ENCODE measurements at regions of chr1 and their contacts with region 1.

Region 1: GRCh38 chr1:161792740-161793139 is 26.6 kb downstream of the ATF6 start:
- DNase-seq: peak in 4 of 5 donors; percentile 42 to 49 (median 44)
- H3K4me3 ChIP-seq: no peak overlapping the region
- H3K4me3 Mint-ChIP-seq: no peak overlapping the region
- H3K27ac ChIP-seq: no peak overlapping the region
- H3K27ac Mint-ChIP-seq: peak overlapping the region in 1 of 7 donors; percentile 10
- H3K4me1 ChIP-seq: no peaks in the 10 kb centered on the region
- H3K4me1 Mint-ChIP-seq: peaks cover 3 to 7% (median 6%) of the 10 kb centered on the region in 4 donors
- H3K27me3 ChIP-seq: no peaks in the 10 kb centered on the region
- H3K27me3 Mint-ChIP-seq: no peaks in the 10 kb centered on the region

Region 2: GRCh38 chr1:161905269-161905884 is 112.6 kb after region 1 on chr1:
- CTCF ChIA-PET with region 1: interaction called, 26 read pairs
- POLR2A ChIA-PET with region 1: no interaction called
- intact Hi-C with region 1: loop called (anchors 10 kb)
- DNase-seq: peak in 3 of 5 donors; percentile 7 to 28 (median 11)
- H3K4me3 ChIP-seq: no peak overlapping the region
- H3K4me3 Mint-ChIP-seq: no peak overlapping the region
- H3K27ac ChIP-seq: no peak overlapping the region
- H3K27ac Mint-ChIP-seq: no peak overlapping the region
- H3K4me1 ChIP-seq: no peaks in the 10 kb centered on the region
- H3K4me1 Mint-ChIP-seq: peaks cover 5 to 9% (median 6%) of the 10 kb centered on the region in 4 donors
- H3K27me3 ChIP-seq: no peaks in the 10 kb centered on the region
- H3K27me3 Mint-ChIP-seq: no peaks in the 10 kb centered on the region

Region 3: DNA sequence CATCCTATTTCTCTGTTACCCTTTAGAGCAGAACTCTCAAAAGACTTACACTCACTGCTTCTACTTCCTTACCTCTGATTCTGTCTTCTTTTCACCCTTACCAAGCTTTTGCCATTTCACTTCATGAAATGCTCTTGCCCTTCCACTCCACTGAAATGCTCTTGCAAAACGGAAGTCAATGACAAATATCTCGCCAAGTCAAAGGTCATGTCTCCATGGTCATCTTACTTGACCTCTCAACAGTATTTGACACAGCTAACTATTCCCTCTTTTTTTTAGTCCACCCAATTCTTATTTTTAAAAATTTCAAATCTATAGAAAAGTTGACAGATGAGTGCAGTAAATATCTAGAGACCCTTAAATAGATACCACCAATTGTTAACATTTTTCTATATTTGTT is 123.2 kb after region 1 on chr1:
- CTCF ChIA-PET with region 1: no interaction called
- POLR2A ChIA-PET with region 1: no interaction called
- intact Hi-C with region 1: no loop called
- DNase-seq: no peak
- H3K4me3 ChIP-seq: no peak overlapping the region
- H3K4me3 Mint-ChIP-seq: no peak overlapping the region
- H3K27ac ChIP-seq: no peak overlapping the region
- H3K27ac Mint-ChIP-seq: no peak overlapping the region
- H3K4me1 ChIP-seq: peaks cover 17% of the 10 kb centered on the region
- H3K4me1 Mint-ChIP-seq: peaks cover 15 to 16% (median 15%) of the 10 kb centered on the region in 4 donors
- H3K27me3 ChIP-seq: no peaks in the 10 kb centered on the region
- H3K27me3 Mint-ChIP-seq: no peaks in the 10 kb centered on the region

Region 4: GRCh38 chr1:162023547-162024501 is 231.1 kb after region 1 on chr1 and contains the start of gene OLFML2B:
- CTCF ChIA-PET with region 1: interaction called, 8 read pairs
- POLR2A ChIA-PET with region 1: no interaction called
- intact Hi-C with region 1: loop called (anchors 1 kb)
- DNase-seq: peak in 4 of 5 donors; percentile 30 to 33 (median 31)
- H3K4me3 ChIP-seq: peak within 1 kb of the TSS; percentile 49 to 63
- H3K4me3 Mint-ChIP-seq: peak within 1 kb of the TSS; percentile 86 to 95 (median 88)
- H3K27ac ChIP-seq: no peak within 1 kb of the TSS
- H3K27ac Mint-ChIP-seq: peak within 1 kb of the TSS in 2 of 7 donors; percentile 30 to 70
- H3K4me1 ChIP-seq: peaks cover 5% of the 10 kb centered on the region
- H3K4me1 Mint-ChIP-seq: peaks cover 3 to 13% (median 7%) of the 10 kb centered on the region in 4 donors
- H3K27me3 ChIP-seq: peaks cover 6% of the 10 kb centered on the region
- H3K27me3 Mint-ChIP-seq: peaks cover 17 to 40% of the 10 kb centered on the region in 2 donors
- total RNA-seq, gene OLFML2B: 0.36 to 0.58 TPM

Region 5: DNA sequence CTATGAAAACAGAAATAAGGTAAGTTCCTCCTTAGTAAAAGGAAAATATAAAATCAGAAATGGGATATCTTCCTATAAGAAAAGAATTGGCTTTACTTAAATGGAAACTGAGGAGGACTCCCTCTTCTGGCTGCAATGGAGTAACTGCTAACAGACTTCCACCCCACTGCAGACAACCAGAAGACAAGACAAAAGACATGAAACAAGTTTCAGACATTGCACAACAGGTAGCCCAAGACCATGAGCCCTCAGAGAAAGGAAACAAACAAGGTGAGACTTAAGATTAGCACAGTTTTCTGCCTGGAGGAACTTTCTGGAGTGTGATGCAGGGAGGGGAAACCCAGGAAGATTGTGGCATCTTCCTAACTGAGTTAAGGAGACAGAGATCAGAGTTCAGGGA is 247.9 kb after region 1 on chr1:
- CTCF ChIA-PET with region 1: interaction called, 213 read pairs
- POLR2A ChIA-PET with region 1: interaction called, 3 read pairs
- intact Hi-C with region 1: loop called (anchors 1 kb)
- DNase-seq: no peak
- H3K4me3 ChIP-seq: no peak overlapping the region
- H3K4me3 Mint-ChIP-seq: no peak overlapping the region
- H3K27ac ChIP-seq: no peak overlapping the region
- H3K27ac Mint-ChIP-seq: no peak overlapping the region
- H3K4me1 ChIP-seq: no peaks in the 10 kb centered on the region
- H3K4me1 Mint-ChIP-seq: peaks cover 0 to 3% (median 3%) of the 10 kb centered on the region in 4 donors
- H3K27me3 ChIP-seq: peaks cover 11% of the 10 kb centered on the region
- H3K27me3 Mint-ChIP-seq: peaks cover 9 to 29% of the 10 kb centered on the region in 2 donors

Region 6: DNA sequence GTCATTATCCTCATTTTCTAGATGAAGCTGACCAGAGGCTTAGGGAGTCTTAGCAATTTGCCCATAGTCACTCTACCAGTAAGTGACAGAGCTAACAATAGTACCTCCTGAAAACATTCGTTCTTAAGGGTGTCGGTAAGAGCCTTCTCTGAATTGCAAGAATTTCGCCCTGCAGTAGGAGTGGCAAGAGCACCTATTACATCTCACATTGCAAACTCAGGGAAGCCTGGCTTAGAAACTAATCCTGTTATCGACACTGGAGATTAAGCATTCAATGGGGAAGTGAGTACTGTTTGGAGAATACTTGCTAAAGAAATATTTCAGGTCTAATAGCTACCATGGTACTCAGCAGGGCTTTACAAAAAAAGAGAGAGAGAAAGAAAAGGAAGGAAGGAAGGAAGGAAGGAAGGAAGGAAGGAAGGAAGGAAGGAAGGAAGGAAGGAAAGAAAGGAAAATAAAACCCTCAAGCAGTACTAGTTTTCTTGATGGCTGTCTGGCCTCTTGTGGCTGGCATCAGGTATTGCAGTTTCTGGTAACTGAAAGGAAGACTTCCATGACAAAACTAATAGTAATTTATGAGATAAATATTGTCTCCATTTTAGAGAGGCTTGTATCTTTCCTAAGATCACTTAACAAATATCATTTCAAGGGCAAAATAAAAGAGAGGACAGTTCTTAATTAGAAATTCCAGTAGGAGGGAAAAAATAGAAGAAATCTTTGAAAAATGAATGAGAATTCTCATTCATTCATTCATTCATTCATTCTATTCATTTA is 599.2 kb after region 1 on chr1:
- CTCF ChIA-PET with region 1: no interaction called
- POLR2A ChIA-PET with region 1: no interaction called
- intact Hi-C with region 1: loop called (anchors 5 kb)
- DNase-seq: peak in 2 of 5 donors; percentile 1 to 2
- H3K4me3 ChIP-seq: no peak overlapping the region
- H3K4me3 Mint-ChIP-seq: no peak overlapping the region
- H3K27ac ChIP-seq: no peak overlapping the region
- H3K27ac Mint-ChIP-seq: peak overlapping the region in 1 of 7 donors; percentile 81
- H3K4me1 ChIP-seq: no peaks in the 10 kb centered on the region
- H3K4me1 Mint-ChIP-seq: peaks cover 0 to 6% (median 0%) of the 10 kb centered on the region in 4 donors
- H3K27me3 ChIP-seq: no peaks in the 10 kb centered on the region
- H3K27me3 Mint-ChIP-seq: peaks cover 7 to 26% of the 10 kb centered on the region in 2 donors